Panc1 (cell line): ENCODE measurements at regions of chr17 and their contacts with region 1.

Region 1: GRCh38 chr17:75896415-75897159 is at the start of gene TRIM65:
- DNase-seq: no peak
- ATAC-seq: peak; percentile 87
- H3K4me3 ChIP-seq: peak within 1 kb of the TSS; percentile 72
- H3K27ac ChIP-seq: peak within 1 kb of the TSS; percentile 88
- H3K4me1 ChIP-seq: peaks cover 19% of the 10 kb centered on the region
- H3K27me3 ChIP-seq: no peaks in the 10 kb centered on the region
- CTCF ChIP-seq: peak; percentile 62
- total RNA-seq, gene TRIM65: 48.6 TPM

Region 2: DNA sequence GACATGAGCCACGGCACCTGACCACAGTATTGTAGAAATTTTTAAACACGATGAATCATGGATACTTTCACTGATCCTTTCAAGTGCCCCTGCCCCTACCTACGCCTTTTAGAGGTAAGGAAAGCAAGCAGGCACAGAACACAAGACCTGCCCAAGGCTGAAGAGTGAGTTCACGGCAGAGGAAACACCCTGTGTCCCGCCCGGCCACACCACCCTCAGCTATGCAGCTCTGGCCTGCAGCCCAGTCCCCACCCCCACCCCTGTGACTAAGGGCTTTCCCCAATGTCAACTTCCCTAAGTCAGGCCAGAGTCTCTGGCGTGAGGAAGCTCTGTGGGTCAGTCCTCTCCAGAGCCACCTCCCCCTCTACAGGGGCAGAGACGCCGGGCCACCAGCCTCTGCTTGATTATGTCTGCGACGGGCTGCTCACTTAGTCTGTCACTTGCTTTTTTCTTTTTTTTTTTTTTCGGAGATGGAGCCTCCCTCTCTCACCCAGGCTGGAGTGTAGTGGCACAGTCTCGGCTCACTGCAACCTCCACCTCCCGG is 800.4 kb before region 1 on chr17:
- CTCF ChIA-PET with region 1: no interaction called
- POLR2A ChIA-PET with region 1: interaction called, 11 read pairs
- in situ Hi-C with region 1: no loop called
- intact Hi-C with region 1: no loop called
- DNase-seq: peak; percentile 80
- ATAC-seq: peak; percentile 73
- H3K4me3 ChIP-seq: no peak overlapping the region
- H3K27ac ChIP-seq: peak overlapping the region; percentile 30; the same call in 1 of the 2 replicates
- H3K4me1 ChIP-seq: peaks cover 35% of the 10 kb centered on the region
- H3K27me3 ChIP-seq: no peaks in the 10 kb centered on the region
- CTCF ChIP-seq: no peak

Region 3: GRCh38 chr17:75785016-75785890 is 111.3 kb before region 1 on chr17:
- CTCF ChIA-PET with region 1: no interaction called
- POLR2A ChIA-PET with region 1: no interaction called
- in situ Hi-C with region 1: no loop called
- intact Hi-C with region 1: no loop called
- DNase-seq: no peak
- ATAC-seq: peak; percentile 87
- H3K4me3 ChIP-seq: peak overlapping the region; percentile 59 to 76
- H3K27ac ChIP-seq: peak overlapping the region; percentile 100
- H3K4me1 ChIP-seq: peaks cover 40% of the 10 kb centered on the region
- H3K27me3 ChIP-seq: no peaks in the 10 kb centered on the region
- CTCF ChIP-seq: no peak

Region 4: GRCh38 chr17:75940724-75941441 is 44.3 kb after region 1 on chr17 and contains the start of gene FBF1:
- CTCF ChIA-PET with region 1: no interaction called
- POLR2A ChIA-PET with region 1: no interaction called
- in situ Hi-C with region 1: no loop called
- intact Hi-C with region 1: no loop called
- DNase-seq: peak; percentile 53
- ATAC-seq: peak; percentile 100
- H3K4me3 ChIP-seq: peak within 1 kb of the TSS; percentile 71 to 77
- H3K27ac ChIP-seq: peak within 1 kb of the TSS; percentile 89
- H3K4me1 ChIP-seq: peaks cover 10% of the 10 kb centered on the region; the same call in 1 of the 2 replicates
- H3K27me3 ChIP-seq: no peaks in the 10 kb centered on the region
- CTCF ChIP-seq: no peak
- total RNA-seq, gene FBF1: 32.5 TPM

Region 5: DNA sequence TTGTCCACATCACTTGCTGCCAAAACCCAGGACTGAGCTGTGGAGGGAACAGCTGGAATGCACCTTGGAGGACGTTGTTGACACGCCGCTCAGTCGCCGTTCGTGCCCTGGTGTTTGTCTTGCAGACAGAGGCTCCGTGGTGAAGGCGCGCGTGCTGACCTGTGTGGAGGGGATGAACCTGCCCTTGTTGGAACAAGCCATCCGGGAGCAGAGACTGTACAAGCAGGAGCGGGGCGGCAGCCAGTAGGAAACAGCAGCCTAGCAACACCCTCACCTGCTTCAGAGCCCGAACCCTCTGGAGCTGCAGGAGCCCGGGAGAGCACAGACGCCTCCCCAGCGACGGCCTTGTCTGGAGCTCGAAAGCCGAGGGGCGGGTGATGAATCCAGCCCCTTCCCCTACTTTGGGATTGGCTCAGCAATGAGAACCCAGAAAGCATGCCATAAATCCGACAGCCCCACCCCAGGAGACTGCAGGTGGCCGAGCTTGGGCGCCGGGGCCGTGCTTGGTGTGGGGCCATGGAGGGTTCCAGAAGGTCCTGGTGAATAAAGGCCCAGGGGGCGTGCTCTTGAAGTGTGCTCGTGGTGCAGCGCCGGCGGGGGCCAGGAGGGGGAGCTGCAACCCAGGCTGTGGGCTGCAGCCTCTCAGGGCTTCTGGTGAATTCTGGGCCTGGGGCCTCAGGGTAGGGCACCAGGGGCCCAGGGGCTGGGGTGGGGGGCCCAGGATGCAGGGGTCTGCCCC is 103.6 kb after region 1 on chr17:
- CTCF ChIA-PET with region 1: no interaction called
- POLR2A ChIA-PET with region 1: no interaction called
- in situ Hi-C with region 1: no loop called
- intact Hi-C with region 1: no loop called
- DNase-seq: no peak
- ATAC-seq: peak; percentile 61
- H3K4me3 ChIP-seq: no peak overlapping the region
- H3K27ac ChIP-seq: no peak overlapping the region
- H3K4me1 ChIP-seq: peaks cover 11% of the 10 kb centered on the region
- H3K27me3 ChIP-seq: no peaks in the 10 kb centered on the region
- CTCF ChIP-seq: peak; percentile 98

Region 6: DNA sequence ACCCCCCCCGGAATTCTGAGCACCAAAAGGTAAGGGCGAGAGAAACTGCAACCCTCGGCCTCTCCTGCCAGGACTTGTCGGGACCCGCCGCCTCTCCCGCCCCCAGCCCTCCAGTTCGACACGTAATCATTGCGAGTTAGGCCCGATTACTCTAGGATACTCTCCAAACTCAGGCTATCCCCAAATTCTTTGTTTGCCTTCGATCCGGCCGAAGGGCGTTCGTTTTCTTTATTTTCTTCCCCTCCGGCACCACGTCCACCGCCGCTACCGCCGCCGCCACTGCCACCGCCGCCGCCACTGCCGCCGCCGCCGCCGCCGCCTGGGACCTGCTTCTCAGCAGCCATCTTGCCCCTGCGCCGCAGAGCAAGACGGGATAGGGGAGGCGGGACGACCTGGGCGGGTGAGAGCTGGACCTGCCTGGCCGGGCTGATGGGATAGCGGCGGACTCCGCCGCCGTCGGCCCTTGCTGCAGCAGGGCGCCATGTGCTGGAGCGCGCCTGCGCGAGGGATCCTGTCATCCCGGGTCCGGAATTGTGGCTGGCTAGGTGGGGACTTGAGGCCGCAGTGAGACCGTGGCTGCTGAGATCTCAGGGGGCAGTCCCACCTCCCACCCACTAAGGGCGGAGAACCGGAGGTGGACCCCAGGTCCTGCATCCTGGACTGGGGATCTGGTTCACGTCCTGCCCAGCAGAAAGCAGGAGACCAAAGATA is 175.7 kb after region 1 on chr17 and contains the start of gene SRP68:
- CTCF ChIA-PET with region 1: no interaction called
- POLR2A ChIA-PET with region 1: interaction called, 11 read pairs
- in situ Hi-C with region 1: no loop called
- intact Hi-C with region 1: no loop called
- DNase-seq: no peak
- ATAC-seq: peak; percentile 99
- H3K4me3 ChIP-seq: peak within 1 kb of the TSS; percentile 88 to 92
- H3K27ac ChIP-seq: peak within 1 kb of the TSS; percentile 92
- H3K4me1 ChIP-seq: peaks cover 7% of the 10 kb centered on the region
- H3K27me3 ChIP-seq: no peaks in the 10 kb centered on the region
- CTCF ChIP-seq: no peak
- total RNA-seq, gene SRP68: 100 TPM

Region 7: GRCh38 chr17:76204277-76204676 is 307.7 kb after region 1 on chr17:
- CTCF ChIA-PET with region 1: no interaction called
- POLR2A ChIA-PET with region 1: interaction called, 11 read pairs
- in situ Hi-C with region 1: no loop called
- intact Hi-C with region 1: no loop called
- DNase-seq: no peak
- ATAC-seq: 0 out of 2 replicates have a peak, but pooled peaks have one; percentile 45
- H3K4me3 ChIP-seq: no peak overlapping the region
- H3K27ac ChIP-seq: no peak overlapping the region
- H3K4me1 ChIP-seq: no peaks in the 10 kb centered on the region
- H3K27me3 ChIP-seq: no peaks in the 10 kb centered on the region
- CTCF ChIP-seq: no peak